Esophagus muscularis mucosa (tissue), 4 donors: ENCODE measurements at regions of chr5 and their contacts with region 1.

Region 1: GRCh38 chr5:6632917-6633468 is at the starts of genes NSUN2 and SRD5A1:
- DNase-seq: peak; percentile 97
- H3K4me3 ChIP-seq: peak within 1 kb of the TSS; percentile 83 to 97 (median 90)
- H3K27ac ChIP-seq: peak within 1 kb of the TSS; percentile 87 to 96 (median 92)
- H3K4me1 ChIP-seq: peaks cover 27 to 57% (median 44%) of the 10 kb centered on the region in 4 donors
- H3K27me3 ChIP-seq: no peaks in the 10 kb centered on the region
- CTCF ChIP-seq: no peak
- EP300 ChIP-seq: no peak
- POLR2A ChIP-seq: no peak
- total RNA-seq, gene NSUN2: 25.7 to 42.8 (median 39.1) TPM
- total RNA-seq, gene SRD5A1: 2.2 to 10.3 (median 4.6) TPM

Region 2: DNA sequence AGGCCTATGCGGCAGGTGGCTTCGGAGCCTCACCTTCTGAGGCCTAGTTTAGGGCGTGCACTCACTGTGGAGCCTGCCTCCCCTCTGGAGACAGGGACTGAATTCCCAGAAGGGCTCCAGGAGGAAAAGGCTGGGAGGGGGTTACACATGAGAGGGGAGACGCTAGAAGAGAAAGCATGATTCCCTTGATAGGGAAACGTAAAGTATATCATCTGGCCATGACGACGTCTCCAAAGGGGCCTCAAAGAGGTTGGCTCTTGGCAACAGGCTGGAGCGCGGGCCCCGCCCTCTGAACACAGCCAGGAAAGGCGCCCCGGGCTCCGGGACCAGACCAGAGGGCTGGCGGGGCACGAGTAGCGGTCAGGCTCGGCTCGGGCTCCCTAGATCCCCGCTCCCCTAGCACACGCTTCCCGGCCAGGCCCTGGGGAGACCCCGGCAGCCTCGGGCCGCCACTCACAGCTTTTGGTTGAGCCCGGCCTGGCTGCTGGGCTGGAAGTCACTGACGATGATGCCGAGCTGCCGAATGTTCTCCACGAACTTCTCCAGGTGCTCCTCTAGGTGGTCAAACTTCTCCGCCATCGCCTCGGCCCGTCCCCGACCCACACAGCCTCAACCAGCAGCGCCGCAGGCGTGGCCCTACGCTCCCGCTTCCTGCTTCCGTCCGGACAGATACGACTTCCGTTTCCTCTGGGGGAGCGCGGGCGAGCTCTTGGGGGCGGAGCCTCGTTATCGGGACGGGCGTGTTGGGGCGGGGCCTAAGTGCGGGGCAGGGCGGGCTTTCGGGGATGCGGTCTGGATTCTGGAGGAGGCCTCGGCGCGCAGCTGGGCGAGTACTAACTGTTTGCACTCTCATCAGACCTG is 254.9 kb before region 1 on chr5 and contains the start of gene MED10:
- intact Hi-C with region 1: loop called (anchors 5 kb)
- DNase-seq: peak; percentile 98
- H3K4me3 ChIP-seq: peak within 1 kb of the TSS; percentile 81 to 98 (median 96)
- H3K27ac ChIP-seq: peak within 1 kb of the TSS; percentile 80 to 93 (median 89)
- H3K4me1 ChIP-seq: peaks cover 19 to 28% (median 26%) of the 10 kb centered on the region in 4 donors
- H3K27me3 ChIP-seq: no peaks in the 10 kb centered on the region
- CTCF ChIP-seq: no peak
- EP300 ChIP-seq: no peak
- POLR2A ChIP-seq: peak; percentile 33
- total RNA-seq, gene MED10: 29.9 to 47.2 (median 35.2) TPM

Region 3: DNA sequence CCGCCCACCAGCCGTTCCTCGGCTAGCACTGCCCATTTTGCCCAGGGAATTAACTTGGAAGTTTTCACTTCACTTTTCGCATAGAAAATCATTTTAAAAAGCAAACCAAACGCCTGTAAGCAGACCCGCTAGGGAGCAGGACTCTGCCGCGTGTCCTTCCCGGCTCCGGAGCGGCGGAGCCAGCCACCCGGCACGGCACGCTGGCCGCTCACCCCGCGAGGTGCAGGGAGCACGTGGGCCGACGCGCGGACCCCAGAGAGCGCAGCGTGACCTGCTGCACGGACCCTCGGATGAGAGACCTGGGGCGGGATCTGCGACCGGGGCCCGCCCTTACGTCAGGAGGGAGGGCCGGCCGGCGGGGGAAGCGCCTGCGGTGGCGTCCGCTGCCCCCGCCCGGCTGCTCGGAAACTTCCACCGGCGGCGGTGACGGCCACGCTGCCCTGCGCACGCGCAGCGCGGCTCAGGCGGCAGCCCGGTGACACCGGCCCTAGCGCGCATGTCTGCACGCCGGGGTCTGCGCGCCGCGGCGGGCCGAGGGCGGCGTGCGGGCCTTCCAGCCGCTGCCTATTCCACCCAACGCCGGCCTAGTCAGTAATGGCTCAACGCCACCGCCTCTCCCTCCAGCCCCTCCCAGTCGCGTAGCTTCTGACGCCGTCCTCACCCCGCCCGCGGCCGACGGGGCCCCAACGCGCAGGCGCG is 79.7 kb after region 1 on chr5:
- intact Hi-C with region 1: loop called (anchors 2 kb)
- DNase-seq: peak; percentile 97
- H3K4me3 ChIP-seq: peak overlapping the region; percentile 71 to 85 (median 74)
- H3K27ac ChIP-seq: peak overlapping the region; percentile 96 to 99 (median 98)
- H3K4me1 ChIP-seq: peaks cover 30 to 42% (median 40%) of the 10 kb centered on the region in 4 donors
- H3K27me3 ChIP-seq: no peaks in the 10 kb centered on the region
- CTCF ChIP-seq: no peak
- EP300 ChIP-seq: no peak
- POLR2A ChIP-seq: peak; percentile 48

Region 4: GRCh38 chr5:6745706-6746222 is 112.8 kb after region 1 on chr5:
- intact Hi-C with region 1: loop called (anchors 2 kb)
- DNase-seq: no peak
- H3K4me3 ChIP-seq: no peak overlapping the region
- H3K27ac ChIP-seq: peak overlapping the region in 2 of 4 donors; percentile 28 to 44
- H3K4me1 ChIP-seq: peaks cover 0 to 10% (median 8%) of the 10 kb centered on the region in 4 donors
- H3K27me3 ChIP-seq: no peaks in the 10 kb centered on the region
- CTCF ChIP-seq: peak; percentile 70 to 82 (median 75)
- EP300 ChIP-seq: no peak
- POLR2A ChIP-seq: no peak

Region 5: DNA sequence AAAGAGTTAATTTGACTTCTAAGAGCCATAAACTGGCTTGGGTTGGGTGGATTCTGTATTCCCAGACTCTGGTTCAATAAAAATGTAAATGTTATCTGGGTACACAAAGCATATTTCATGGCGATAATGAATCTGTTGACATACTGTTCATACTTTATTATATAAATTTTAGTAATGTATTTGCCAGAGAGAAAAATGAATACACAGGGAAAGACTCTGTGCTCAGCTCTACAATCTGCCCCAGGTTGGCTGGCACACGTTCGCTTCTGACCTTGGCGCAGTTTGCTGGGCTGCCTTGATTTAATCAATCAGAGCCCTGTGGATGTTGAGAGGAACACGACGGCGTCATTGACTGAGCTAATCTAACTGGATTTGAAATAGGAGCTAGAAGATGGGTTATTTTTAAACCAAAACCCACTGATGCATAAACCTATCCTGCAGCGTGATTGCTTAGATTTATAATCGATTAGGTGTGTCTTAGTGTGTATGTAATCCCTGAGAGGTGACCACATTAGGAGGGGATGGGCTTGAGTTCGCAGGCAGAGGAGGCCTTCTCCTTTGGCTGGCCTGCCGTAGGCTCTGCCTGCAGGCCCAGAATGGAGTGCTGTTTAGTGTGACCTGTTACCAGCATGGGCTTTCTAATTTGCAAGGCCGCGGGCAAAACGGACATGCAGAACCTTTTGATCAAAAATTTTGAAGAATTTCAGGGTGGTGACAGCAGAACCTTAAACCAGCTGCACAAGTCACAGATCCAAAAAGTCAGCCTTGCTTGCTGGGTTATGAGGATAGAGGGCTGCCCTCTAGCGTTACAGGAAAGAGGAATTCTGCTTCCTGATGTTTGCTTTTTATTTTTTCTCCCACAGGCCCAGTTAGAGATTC is 759.1 kb after region 1 on chr5:
- intact Hi-C with region 1: loop called (anchors 10 kb)
- DNase-seq: peak; percentile 82
- H3K4me3 ChIP-seq: no peak overlapping the region
- H3K27ac ChIP-seq: no peak overlapping the region
- H3K4me1 ChIP-seq: peaks cover 9 to 32% (median 17%) of the 10 kb centered on the region in 4 donors
- H3K27me3 ChIP-seq: peaks cover 0 to 22% (median 0%) of the 10 kb centered on the region in 4 donors
- CTCF ChIP-seq: peak; percentile 55 to 66 (median 60)
- EP300 ChIP-seq: no peak
- POLR2A ChIP-seq: no peak